Activated B cell treated with CpG ODN at 0.5 μM for 24 hours (primary cell): ENCODE measurements at regions of chr7 and their contacts with region 1.

Region 1: DNA sequence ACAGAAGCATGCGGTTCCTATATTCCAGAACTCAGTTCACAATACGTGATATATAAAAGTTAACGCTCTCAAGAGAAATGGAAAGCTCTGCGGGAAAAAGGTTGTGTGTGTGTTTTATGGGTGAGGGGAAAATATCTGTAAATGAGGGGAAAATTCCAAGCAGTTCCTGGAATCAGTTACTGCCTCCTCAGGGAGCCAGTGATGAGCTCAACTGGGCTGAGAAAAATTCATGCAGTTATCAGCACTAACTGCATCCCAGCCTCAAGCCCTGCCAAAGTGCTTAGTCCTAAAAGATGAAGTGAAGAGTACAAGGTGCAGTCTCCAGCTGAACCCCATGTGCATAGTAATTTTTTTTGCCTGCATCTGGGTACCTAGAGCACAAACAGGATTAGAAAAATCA is 191.9 kb downstream of the CDK14 start:
- DNase-seq: no peak
- ATAC-seq: no peak
- H3K4me3 Mint-ChIP-seq: no peak overlapping the region
- H3K27ac Mint-ChIP-seq: no peak overlapping the region
- H3K4me1 Mint-ChIP-seq: peaks cover 14% of the 10 kb centered on the region
- H3K27me3 Mint-ChIP-seq: no peaks in the 10 kb centered on the region
- CTCF ChIP-seq: no peak

Region 2: DNA sequence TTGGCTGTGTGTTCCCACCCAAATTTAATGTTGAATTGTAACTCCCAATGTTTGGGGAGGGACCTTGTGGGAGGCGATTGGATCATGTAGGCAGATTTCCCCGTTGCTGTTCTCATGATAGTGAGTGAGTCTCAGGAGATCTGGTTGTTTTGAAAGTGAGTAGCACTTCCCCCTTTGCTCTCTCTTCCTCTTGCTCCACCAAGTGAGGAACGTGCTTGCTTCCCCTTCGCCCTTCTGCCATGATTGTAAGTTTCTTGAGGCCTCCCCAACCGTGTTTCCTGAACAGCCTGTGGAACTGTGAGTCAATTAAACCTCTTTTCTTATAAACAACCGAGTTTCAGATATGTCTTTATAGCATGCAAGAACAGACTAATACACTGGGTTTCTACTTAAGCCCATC is 15.6 kb before region 1 on chr7:
- CTCF ChIA-PET with region 1: no interaction called
- POLR2A ChIA-PET with region 1: interaction called, 5 read pairs
- intact Hi-C with region 1: loop called (anchors 2 kb)
- DNase-seq: peak; percentile 30
- ATAC-seq: peak; percentile 91
- H3K4me3 Mint-ChIP-seq: peak overlapping the region; percentile 36
- H3K27ac Mint-ChIP-seq: peak overlapping the region; percentile 89
- H3K4me1 Mint-ChIP-seq: peaks cover 37% of the 10 kb centered on the region
- H3K27me3 Mint-ChIP-seq: no peaks in the 10 kb centered on the region
- CTCF ChIP-seq: no peak

Region 3: GRCh38 chr7:90834771-90835170 is 46.7 kb after region 1 on chr7:
- CTCF ChIA-PET with region 1: no interaction called
- POLR2A ChIA-PET with region 1: no interaction called
- intact Hi-C with region 1: no loop called
- DNase-seq: no peak
- ATAC-seq: no peak
- H3K4me3 Mint-ChIP-seq: no peak overlapping the region
- H3K27ac Mint-ChIP-seq: no peak overlapping the region
- H3K4me1 Mint-ChIP-seq: peaks cover 31% of the 10 kb centered on the region
- H3K27me3 Mint-ChIP-seq: no peaks in the 10 kb centered on the region
- CTCF ChIP-seq: no peak